ENCODE measurements at regions of chr16 and their contacts with region 1.

Region 1: DNA sequence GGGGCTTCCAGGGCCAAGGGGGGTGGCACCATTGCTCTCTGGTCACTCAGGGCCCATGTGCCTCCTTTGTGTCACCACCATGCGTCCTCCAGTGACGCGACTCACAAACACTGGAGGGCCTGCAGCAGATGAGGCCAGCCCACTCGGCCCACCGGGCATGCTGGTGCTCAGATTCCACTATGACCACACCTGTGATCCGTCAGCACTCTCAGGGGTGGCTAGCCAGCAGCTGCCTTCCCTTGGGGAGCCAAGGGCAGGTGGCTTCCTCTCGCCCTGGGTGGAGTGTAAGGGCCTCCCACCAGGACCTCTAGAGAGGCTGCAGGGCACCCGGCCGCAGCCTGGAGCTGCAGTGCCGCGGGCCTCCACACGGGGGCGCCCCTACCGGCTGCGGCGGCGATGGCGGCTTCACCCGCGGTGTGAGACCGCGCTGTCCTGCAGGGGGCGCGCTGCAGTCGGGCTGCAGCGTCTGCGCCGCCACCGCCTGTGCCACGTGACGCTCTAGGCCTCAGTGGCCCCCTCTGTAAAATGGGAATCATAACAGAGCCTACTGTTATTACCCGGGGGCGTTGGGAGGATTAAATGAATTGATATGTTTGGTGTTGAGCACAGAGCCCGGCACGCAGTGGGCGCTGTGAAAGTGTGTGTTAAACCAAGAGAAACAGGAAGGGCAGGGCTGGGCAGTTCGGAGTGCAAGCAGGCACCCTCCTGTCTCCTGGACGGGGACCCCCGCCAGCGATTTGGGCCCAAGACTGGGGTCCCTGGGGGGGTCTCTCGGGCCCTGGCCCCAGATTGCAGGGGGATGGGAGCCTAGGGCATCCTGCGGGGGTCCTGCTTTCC is 192.4 kb upstream of the GSE1 start:
- H3K4me3 Mint-ChIP-seq: no peak overlapping the region
- H3K27ac Mint-ChIP-seq: no peak overlapping the region
- H3K4me1 Mint-ChIP-seq: peaks cover 6% of the 10 kb centered on the region
- H3K27me3 Mint-ChIP-seq: peaks cover 40% of the 10 kb centered on the region

Region 2: GRCh38 chr16:85563515-85564276 is 143.0 kb after region 1 on chr16:
- intact Hi-C with region 1: loop called (anchors 2 kb)
- H3K4me3 Mint-ChIP-seq: no peak overlapping the region
- H3K27ac Mint-ChIP-seq: peak overlapping the region; percentile 67
- H3K4me1 Mint-ChIP-seq: peaks cover 94% of the 10 kb centered on the region
- H3K27me3 Mint-ChIP-seq: no peaks in the 10 kb centered on the region

Region 3: DNA sequence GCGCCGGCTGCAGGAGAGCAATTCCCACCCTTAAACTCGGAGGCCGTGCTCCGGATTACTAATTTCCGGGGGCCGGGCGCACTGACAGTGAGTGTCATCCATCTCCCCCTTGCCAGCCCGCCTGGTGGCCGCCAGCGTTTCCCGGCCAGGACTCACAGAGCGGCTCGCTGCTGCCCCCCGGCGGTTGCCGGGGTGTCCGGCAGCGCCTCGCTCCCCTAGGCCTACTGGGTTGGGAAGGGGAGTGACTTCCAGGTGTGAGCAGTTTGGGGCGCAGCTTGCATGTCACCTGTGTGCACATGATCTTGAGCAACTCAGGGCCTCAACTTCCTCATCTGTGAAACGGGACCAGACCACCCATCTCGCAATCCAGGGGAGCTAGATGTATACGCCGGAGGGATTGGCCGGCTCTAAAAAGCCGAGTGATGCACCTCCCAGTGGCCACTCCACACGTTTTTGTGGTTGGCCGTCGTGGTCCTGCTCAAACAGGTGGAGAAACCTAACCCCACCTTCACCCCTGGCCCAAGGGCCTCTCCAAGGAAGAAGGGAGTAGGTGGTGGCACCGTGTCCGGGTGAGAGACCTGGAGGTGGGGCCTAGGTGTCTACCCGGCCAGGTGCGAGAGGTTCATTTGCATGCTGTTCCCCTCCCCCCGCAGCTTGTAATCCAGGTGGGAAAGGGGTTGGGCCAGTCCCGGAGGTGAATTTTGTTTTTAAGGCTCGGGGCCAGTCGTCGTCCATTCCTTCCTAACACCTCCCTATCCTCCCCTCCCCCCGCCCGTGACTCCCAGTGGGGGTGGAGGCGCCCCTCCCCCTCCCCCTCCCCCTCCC is 190.0 kb after region 1 on chr16:
- intact Hi-C with region 1: loop called (anchors 2 kb)
- H3K4me3 Mint-ChIP-seq: peak overlapping the region; percentile 42
- H3K27ac Mint-ChIP-seq: peak overlapping the region; percentile 63
- H3K4me1 Mint-ChIP-seq: peaks cover 40% of the 10 kb centered on the region
- H3K27me3 Mint-ChIP-seq: peaks cover 13% of the 10 kb centered on the region

Region 4: GRCh38 chr16:85717393-85718121 is 296.8 kb after region 1 on chr16:
- intact Hi-C with region 1: loop called (anchors 10 kb)
- H3K4me3 Mint-ChIP-seq: no peak overlapping the region
- H3K27ac Mint-ChIP-seq: no peak overlapping the region
- H3K4me1 Mint-ChIP-seq: peaks cover 13% of the 10 kb centered on the region
- H3K27me3 Mint-ChIP-seq: peaks cover 15% of the 10 kb centered on the region